Motor neuron (in vitro differentiated cells): ENCODE measurements at regions of chr21 and their contacts with region 1.

Region 1: GRCh38 chr21:33894736-33895288 is 20.8 kb downstream of the ATP5PO start:
- ATAC-seq: peak; percentile 95 to 99 (median 98)
- H3K4me3 ChIP-seq: peak overlapping the region in 2 of 5 donors; percentile 6 to 8
- H3K27ac ChIP-seq: no peak overlapping the region
- H3K4me1 ChIP-seq: peaks cover 5 to 19% of the 10 kb centered on the region in 2 donors

Region 2: DNA sequence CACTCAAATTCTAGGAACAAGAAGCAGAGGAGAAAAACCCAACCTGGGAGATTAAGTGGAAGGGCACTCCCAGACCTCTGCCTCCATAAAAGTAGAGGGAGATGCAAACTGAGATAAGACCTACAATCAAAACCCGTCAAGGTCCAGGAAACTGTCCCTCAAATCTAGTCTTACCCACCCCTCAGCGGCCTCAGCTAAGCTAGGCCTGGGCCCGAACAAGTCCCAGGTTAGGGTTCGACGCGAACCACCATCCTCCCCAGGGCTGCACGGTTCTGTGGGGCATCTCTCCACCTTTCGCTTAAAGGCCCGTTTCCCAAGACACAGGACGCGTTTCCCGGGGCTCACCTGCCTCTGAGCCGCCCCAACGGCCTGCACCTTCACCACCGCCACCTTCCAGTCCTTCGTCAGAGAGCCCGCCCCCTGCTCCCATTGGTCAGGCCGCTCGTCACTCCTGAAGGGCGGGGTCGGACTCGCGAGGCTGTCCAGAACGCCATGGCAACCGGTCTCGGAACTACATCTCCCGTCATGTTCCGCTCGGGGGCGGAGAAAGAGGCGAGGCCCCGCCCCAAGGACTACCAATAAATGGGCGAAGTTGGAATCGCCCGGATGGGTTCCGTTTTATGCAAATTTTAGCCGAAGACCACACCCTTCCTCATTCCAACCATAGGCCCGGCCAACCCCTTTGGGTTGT is 253.3 kb before region 1 on chr21 and contains the start of gene CRYZL1:
- in situ Hi-C with region 1: loop called in 2 of 9 experiments (anchors 25 kb)
- ATAC-seq: peak; percentile 68 to 81 (median 78)
- H3K4me3 ChIP-seq: peak within 1 kb of the TSS; percentile 57 to 77 (median 59)
- H3K27ac ChIP-seq: peak within 1 kb of the TSS; percentile 91 to 97
- H3K4me1 ChIP-seq: peaks cover 9 to 11% of the 10 kb centered on the region in 2 donors
- total RNA-seq, gene CRYZL1: 27.0 to 49.3 (median 44.5) TPM

Region 3: DNA sequence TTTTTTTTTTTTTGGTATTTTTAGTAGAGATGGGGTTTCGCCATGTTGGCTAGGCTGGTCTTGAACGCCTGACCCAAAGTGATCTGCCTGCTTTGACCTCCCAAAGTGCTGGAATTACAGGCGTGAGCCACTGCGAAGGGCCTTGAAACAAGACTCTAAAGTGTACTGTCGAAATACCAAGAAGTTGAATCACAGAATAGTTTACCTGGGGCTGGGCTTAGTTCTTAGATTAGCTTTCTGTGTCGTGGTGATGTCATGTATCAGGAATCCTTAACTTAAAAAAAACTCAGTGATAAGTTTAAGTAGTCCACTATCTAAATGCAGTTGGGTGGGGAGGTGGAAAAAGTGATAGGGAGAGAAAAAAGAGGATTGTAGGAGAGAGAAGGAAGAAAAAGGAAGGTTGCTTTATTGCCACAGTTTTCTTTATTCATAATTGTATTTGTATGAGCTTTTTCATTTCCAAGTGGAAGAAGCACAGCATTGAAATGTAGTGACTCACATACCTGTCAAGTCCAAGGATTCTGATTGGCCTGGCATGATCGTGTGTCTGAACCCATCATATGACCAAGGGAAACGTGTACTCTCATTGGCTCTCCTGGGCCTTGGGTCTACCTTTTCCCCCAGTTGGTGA is 239.1 kb before region 1 on chr21:
- in situ Hi-C with region 1: loop called in 1 of 9 experiments (anchors 25 kb)
- ATAC-seq: peak in 3 of 8 experiments; percentile 32 to 78 (median 41)
- H3K4me3 ChIP-seq: no peak overlapping the region
- H3K27ac ChIP-seq: no peak overlapping the region
- H3K4me1 ChIP-seq: peaks cover 0 to 5% of the 10 kb centered on the region in 2 donors

Region 4: DNA sequence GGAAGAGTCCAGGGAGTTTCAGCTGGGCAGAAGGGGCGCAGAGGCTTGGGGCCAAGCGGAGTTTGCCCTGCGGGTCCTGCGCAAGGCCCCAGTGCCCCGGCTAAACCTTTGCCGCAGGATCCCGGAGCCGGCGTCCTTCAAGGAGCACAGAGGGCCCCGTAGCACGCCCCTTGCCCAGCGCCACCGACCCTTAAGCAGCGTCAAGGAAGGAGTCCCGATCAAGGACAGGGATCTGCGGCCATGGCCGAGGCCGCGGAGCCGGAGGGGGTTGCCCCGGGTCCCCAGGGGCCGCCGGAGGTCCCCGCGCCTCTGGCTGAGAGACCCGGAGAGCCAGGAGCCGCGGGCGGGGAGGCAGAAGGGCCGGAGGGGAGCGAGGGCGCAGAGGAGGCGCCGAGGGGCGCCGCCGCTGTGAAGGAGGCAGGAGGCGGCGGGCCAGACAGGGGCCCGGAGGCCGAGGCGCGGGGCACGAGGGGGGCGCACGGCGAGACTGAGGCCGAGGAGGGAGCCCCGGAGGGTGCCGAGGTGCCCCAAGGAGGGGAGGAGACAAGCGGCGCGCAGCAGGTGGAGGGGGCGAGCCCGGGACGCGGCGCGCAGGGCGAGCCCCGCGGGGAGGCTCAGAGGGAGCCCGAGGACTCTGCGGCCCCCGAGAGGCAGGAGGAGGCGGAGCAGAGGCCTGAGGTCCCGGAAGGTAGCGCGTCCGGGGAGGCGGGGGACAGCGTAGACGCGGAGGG is 774.5 kb after region 1 on chr21:
- in situ Hi-C with region 1: no loop called
- ATAC-seq: peak; percentile 18 to 63 (median 53)
- H3K4me3 ChIP-seq: peak overlapping the region in 3 of 5 donors; percentile 8 to 21 (median 17)
- H3K27ac ChIP-seq: no peak overlapping the region
- H3K4me1 ChIP-seq: peaks cover 0 to 4% of the 10 kb centered on the region in 2 donors